ENCODE measurements at regions of chr12 and their contacts with region 1.

Region 1: GRCh38 chr12:990661-991349 is at the start of gene ERC1:
- DNase-seq: peak; percentile 82
- H3K4me3 Mint-ChIP-seq: peak within 1 kb of the TSS; percentile 91
- H3K27ac Mint-ChIP-seq: peak within 1 kb of the TSS; percentile 88
- H3K4me1 Mint-ChIP-seq: peaks cover 35% of the 10 kb centered on the region
- H3K27me3 Mint-ChIP-seq: peaks cover 7% of the 10 kb centered on the region
- total RNA-seq, gene ERC1: 33.6 and 34.3 TPM in 2 replicates

Region 2: DNA sequence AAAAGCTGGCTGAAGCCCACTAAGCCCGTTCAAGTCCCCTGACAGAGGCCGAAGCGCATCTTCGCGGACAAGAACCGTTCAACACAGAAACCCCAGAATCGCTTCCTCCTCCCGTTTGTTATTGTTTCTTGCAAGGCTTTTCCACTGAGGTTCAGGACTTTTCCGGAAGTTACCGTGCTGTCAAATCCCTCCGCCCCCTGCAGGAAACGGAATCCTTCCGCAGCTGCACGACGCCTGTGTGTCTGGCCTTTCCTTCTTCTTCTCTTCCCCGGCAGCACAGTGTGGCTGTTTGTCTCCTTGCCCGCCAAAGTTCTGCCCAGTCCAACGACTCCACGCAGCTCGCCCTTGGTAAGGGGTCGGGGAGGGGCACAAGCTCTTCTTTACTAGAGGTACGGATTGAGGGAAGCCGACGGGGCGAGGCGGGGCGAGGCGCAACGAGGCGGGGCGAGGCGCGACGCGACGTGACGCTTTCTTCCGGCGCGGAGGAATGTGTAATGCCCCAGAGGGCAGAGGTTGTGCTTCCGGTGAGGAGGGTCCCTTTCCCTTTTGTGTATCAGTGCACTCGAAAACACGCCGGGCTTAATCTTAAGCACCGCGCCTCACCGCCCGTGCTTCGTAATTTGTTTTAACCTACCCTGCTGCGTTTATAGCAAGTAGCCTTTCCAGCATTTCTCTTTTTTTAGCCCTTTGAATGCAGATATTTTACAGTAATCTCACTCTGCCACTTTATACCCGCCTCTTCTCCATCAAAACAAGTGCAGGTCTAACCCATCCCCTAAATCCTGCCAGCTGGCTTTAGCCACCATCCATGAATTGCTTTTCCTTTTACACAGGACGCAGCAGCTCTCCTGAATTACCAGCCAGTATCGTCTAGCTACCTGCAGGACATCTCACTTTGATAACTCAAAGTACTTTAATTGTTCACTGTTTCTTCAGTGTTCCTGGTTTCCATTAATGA is 601.4 kb before region 1 on chr12 and contains the start of gene KDM5A:
- intact Hi-C with region 1: loop called (anchors 5 kb)
- DNase-seq: peak; percentile 82
- H3K4me3 Mint-ChIP-seq: peak within 1 kb of the TSS; percentile 94
- H3K27ac Mint-ChIP-seq: peak within 1 kb of the TSS; percentile 98
- H3K4me1 Mint-ChIP-seq: peaks cover 34% of the 10 kb centered on the region
- H3K27me3 Mint-ChIP-seq: no peaks in the 10 kb centered on the region
- total RNA-seq, gene KDM5A: 81.2 and 83.8 TPM in 2 replicates

Region 3: DNA sequence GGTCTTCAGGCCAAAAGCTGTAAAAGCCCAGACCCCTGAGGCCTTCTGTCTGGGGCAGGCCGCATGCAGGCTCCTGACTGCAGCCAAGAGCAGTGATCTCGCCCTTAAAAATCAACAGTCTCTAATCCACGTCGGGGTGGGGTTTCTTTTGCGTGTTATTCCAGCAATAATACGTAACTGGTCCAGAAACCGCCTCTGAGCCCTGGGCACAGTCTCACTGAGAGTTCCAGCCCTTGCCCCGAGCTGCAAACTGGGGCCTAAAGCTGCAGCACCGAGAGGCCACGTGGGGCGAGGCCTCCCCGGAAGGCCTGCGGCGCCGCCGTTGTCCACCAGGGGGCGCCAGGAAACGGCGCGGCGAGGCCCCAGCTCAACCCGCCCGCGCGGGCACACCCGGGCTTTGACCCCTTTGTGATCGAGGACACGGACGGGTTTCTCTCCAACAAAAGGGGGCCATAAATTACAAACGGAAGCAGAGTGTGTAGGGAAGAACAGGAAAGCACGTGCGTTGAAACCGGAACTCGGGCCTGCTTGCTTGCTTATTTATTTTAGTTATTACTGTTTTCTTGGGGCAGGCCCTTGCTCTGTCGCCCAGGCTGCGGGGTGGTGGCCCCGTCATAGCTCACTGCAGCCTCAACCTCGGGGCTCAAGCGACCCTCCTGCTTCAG is 414.7 kb before region 1 on chr12:
- intact Hi-C with region 1: loop called (anchors 2 kb)
- DNase-seq: peak; percentile 81
- H3K4me3 Mint-ChIP-seq: no peak overlapping the region
- H3K27ac Mint-ChIP-seq: peak overlapping the region; percentile 80
- H3K4me1 Mint-ChIP-seq: peaks cover 33% of the 10 kb centered on the region
- H3K27me3 Mint-ChIP-seq: peaks cover 4% of the 10 kb centered on the region

Region 4: DNA sequence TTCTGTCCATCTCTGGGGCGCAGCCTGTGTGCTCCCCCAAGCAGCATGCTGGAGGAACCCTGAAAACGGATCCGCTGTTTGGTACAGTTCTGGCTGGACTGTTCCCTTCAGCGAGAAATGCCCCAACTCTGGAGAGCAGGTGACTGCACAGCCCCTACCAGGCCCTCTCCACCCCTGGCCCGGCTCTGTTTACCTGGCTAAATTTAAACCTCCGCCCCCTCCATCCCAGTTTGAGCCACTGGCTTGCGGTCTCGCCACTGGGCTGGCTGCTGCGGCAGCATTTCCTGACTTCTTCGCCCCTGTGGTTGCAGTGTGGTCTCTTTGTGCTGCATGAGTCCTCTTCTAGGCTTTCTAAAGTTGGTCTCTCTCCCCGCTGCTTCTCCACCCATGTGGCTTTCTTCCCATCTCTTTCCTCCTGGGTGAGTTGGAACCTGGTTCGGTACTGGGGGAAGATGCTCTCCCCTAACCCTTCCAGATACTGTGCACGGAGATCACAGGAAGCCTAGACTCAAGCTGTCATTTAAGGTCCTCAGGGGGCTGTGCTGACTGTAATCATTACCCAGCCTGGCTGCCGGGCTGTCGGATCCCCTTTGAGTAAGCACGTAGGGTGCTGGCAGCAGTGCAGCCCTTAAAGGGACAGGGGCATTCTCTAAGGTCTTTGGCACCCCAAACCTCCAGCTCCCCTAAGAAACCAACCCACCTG is 542.9 kb after region 1 on chr12:
- intact Hi-C with region 1: loop called (anchors 5 kb)
- DNase-seq: peak; percentile 56
- H3K4me3 Mint-ChIP-seq: peak overlapping the region; percentile 79
- H3K27ac Mint-ChIP-seq: peak overlapping the region; percentile 53
- H3K4me1 Mint-ChIP-seq: peaks cover 27% of the 10 kb centered on the region
- H3K27me3 Mint-ChIP-seq: peaks cover 54% of the 10 kb centered on the region

Region 5: GRCh38 chr12:1690578-1691122 is 699.8 kb after region 1 on chr12 and contains the start of gene ADIPOR2:
- intact Hi-C with region 1: loop called (anchors 2 kb)
- DNase-seq: peak; percentile 93
- H3K4me3 Mint-ChIP-seq: peak within 1 kb of the TSS; percentile 99
- H3K27ac Mint-ChIP-seq: peak within 1 kb of the TSS; percentile 96
- H3K4me1 Mint-ChIP-seq: peaks cover 50% of the 10 kb centered on the region
- H3K27me3 Mint-ChIP-seq: peaks cover 3% of the 10 kb centered on the region
- total RNA-seq, gene ADIPOR2: 69.4 and 75.2 TPM in 2 replicates